H1 (cell line): ENCODE measurements at regions of chr1 and their contacts with region 1.

Region 1: DNA sequence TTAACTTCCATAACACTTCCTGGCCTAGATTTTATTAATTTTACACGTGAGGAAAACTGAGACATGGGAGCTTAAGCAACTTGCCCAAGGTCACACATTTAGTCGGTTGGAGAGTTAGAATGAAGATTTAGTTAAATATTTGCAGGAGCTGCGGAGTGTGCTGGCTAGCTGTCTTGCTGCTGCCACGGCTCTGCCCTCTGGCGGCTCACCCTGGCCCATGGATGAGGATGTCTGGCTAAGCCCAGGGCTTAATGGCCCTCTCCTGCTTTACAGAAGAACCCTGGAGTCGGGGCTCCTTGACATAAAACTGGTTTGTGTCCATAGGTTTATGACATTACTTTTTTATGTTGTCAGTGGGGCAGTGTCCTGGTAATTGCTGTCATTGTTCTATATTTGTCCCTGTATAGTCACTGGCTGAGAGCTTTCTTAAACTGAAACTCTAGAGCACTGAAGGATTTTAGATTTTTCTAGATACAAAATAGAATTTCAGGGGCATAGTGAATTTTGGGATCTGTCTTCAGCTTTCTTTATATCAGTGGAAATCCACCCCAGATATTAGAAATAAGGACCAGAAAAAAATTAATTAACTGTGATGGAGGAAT is 88.9 kb upstream of the WLS start:
- DNase-seq: peak; percentile 23 to 56
- H3K4me3 ChIP-seq: no peak overlapping the region
- H3K27ac ChIP-seq: no peak overlapping the region
- H3K4me1 ChIP-seq: peaks cover 0 to 5% (median 0%) of the 10 kb centered on the region in 4 experiments; a peak in 1 of 7 replicates
- H3K27me3 ChIP-seq: no peaks in the 10 kb centered on the region; a peak in 1 of 7 replicates
- CTCF ChIP-seq: peak; percentile 72 to 85 (median 78)
- EP300 ChIP-seq: no peak
- POLR2A ChIP-seq: no peak
- RAD21 ChIP-seq: peak; percentile 79 to 82

Region 2: DNA sequence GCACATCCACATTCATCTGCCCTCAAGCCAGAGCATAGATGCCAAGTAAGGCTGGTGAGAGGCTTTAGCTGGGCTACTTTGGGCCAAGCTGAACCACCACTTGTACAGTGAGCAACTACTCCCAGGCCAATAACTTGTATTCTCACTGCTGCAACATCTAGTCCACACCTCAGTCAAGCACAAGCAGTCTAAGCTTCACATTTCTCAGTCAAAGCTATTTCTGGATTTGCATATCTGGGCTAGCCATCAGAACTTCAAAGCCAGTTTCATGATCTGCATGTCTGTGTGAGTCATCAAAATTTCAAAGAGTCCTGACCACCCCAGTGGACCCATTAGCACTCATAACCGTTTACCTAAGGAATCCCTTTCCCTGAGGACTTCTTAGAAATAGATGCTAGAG is 193.0 kb before region 1 on chr1:
- CTCF ChIA-PET with region 1: interaction called, 154 read pairs
- POLR2A ChIA-PET with region 1: no interaction called
- DNase-seq: no peak
- H3K4me3 ChIP-seq: no peak overlapping the region
- H3K27ac ChIP-seq: no peak overlapping the region
- H3K4me1 ChIP-seq: peaks cover 0 to 4% (median 0%) of the 10 kb centered on the region in 4 experiments; a peak in 2 of 7 replicates
- H3K27me3 ChIP-seq: no peaks in the 10 kb centered on the region
- CTCF ChIP-seq: no peak
- EP300 ChIP-seq: no peak
- POLR2A ChIP-seq: no peak
- RAD21 ChIP-seq: no peak

Region 3: DNA sequence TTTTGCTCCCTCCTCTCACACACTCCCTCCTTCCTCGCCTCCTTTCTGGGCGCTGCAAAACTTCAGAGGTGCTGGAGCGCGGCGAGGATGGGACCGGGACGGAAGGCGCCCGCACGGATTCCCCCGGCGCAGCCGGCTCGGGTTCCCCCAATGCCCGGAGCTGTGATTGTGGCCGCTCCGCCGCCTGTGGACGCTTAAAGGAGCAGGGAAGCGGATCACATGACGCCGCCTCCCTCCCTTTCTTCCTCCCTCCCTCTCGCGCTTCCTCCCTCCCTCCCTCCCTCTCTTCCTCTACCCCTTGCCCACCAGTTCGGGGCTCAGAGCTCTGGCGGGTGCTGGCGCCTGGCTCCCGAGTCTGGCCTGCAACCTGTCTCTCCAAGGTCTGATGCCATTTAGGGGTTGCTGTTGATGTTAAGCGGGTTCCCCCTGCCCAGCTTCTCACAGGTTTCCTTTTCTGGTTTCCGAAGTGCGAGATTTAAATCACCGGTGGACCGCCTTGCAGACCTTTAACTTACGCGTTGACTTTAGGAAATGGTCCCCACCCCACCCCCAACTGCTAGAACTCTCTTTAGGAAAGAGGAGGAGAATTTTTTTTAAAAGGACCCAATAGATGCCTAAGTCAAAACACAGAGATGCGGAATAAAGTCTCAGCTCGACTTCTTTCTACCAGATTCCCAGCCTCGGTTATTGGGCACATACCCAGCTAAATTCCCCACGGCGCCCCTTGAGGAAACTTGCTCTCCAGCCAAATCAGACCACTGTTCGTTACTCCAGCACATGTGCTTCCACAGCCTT is 88.6 kb before region 1 on chr1 and contains the start of gene WLS:
- CTCF ChIA-PET with region 1: interaction called, 12 read pairs
- POLR2A ChIA-PET with region 1: interaction called, 3 read pairs
- DNase-seq: peak in 1 of 2 experiments; percentile 79
- H3K4me3 ChIP-seq: peak within 1 kb of the TSS; percentile 73 to 77 (median 74)
- H3K27ac ChIP-seq: no peak within 1 kb of the TSS
- H3K4me1 ChIP-seq: peaks cover 2 to 14% (median 7%) of the 10 kb centered on the region in 4 experiments
- H3K27me3 ChIP-seq: peaks cover 59 to 98% (median 83%) of the 10 kb centered on the region in 4 experiments
- CTCF ChIP-seq: no peak
- EP300 ChIP-seq: no peak
- POLR2A ChIP-seq: no peak
- RAD21 ChIP-seq: no peak; a peak in 1 of 4 replicates
- total RNA-seq, gene WLS: 1.6 and 2.7 TPM in 2 replicates

Region 4: DNA sequence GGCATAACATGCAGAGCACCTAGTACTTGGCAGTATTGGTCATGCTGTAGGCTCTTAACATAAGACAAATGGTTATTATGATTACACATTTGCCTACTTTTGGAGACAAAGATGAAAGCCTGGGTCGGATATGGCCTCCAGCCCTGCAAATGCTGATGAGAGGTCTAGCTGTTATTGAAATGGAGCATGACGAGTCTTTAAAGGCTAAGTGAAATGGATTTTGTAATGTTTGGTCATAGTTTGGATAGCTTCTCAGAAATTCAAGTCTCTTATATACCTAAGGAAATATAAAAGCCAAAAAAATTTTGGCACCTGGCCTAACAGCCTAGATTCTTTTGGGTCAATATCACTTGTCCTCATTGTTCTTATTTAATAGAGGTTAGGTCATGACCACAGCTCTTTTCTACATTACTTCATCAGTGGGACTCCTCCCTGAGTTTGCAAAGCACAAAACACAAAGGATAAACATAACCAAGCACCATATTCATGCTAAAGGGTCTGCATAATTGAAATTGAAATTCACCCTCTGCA is 19.6 kb before region 1 on chr1:
- CTCF ChIA-PET with region 1: interaction called, 11 read pairs
- POLR2A ChIA-PET with region 1: no interaction called
- DNase-seq: no peak
- H3K4me3 ChIP-seq: no peak overlapping the region
- H3K27ac ChIP-seq: no peak overlapping the region
- H3K4me1 ChIP-seq: no peaks in the 10 kb centered on the region
- H3K27me3 ChIP-seq: peaks cover 0 to 10% (median 7%) of the 10 kb centered on the region in 4 experiments; a peak in 6 of 7 replicates
- CTCF ChIP-seq: no peak
- EP300 ChIP-seq: no peak
- POLR2A ChIP-seq: no peak
- RAD21 ChIP-seq: no peak

Region 5: DNA sequence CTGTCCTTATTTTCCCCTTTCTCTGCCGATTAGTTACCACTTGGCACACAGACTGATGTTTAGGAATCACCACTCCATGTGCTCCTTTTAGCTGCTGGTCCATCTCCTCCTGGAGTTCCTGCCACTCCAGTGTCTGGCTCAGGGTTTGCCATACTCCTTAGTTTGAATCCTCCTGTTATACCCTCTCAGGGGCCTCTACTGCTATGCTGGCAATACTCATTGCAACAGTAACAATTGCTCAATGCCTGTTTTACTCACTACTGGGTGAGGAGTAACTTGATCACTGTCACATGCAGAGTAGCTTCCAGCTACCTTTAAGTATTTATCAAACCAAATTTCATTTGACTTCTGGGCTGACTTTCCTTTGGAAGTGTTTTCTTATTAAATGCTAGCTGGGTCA is 18.3 kb after region 1 on chr1:
- CTCF ChIA-PET with region 1: interaction called, 64 read pairs
- POLR2A ChIA-PET with region 1: no interaction called
- DNase-seq: no peak
- H3K4me3 ChIP-seq: no peak overlapping the region
- H3K27ac ChIP-seq: no peak overlapping the region
- H3K4me1 ChIP-seq: no peaks in the 10 kb centered on the region
- H3K27me3 ChIP-seq: no peaks in the 10 kb centered on the region
- CTCF ChIP-seq: no peak
- EP300 ChIP-seq: no peak
- POLR2A ChIP-seq: no peak
- RAD21 ChIP-seq: no peak

Region 6: DNA sequence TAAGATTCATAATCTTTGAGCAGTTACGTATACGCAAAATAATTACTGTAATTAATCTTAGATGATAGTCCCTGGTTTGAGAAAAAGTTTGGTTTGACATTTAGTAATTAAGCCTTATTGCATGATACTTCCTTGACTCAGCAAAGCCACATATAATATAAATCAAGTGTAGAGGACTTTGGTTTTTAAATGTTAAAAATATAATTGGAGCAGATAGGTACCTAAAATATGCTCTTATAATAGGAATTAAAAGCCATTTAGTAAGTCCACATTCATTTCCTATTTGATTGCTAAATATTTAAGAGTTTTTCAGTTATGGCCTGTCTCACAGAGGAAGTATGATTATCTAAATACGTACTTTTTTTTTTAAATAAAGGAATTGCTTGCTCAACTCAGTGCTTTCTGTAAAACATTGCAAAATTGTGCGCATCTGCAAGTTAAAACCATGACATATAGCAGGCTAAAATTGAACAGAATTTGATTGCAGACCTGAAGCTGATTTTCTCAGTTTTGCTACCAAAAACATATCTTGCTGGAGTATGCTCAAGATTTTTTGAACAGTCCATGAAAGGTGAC is 108.1 kb after region 1 on chr1:
- CTCF ChIA-PET with region 1: no interaction called
- POLR2A ChIA-PET with region 1: no interaction called
- DNase-seq: no peak
- H3K4me3 ChIP-seq: no peak overlapping the region
- H3K27ac ChIP-seq: no peak overlapping the region
- H3K4me1 ChIP-seq: no peaks in the 10 kb centered on the region
- H3K27me3 ChIP-seq: no peaks in the 10 kb centered on the region
- CTCF ChIP-seq: no peak
- EP300 ChIP-seq: no peak
- POLR2A ChIP-seq: no peak
- RAD21 ChIP-seq: no peak